ENCODE measurements at regions of chr6 and their contacts with region 1.

Region 1: GRCh38 chr6:159968440-159969203 is at the start of gene IGF2R:
- DNase-seq: peak; percentile 97
- ATAC-seq: peak; percentile 89
- H3K4me3 Mint-ChIP-seq: peak within 1 kb of the TSS; percentile 88
- H3K27ac Mint-ChIP-seq: peak within 1 kb of the TSS; percentile 89
- H3K4me1 Mint-ChIP-seq: peaks cover 33% of the 10 kb centered on the region
- H3K27me3 Mint-ChIP-seq: peaks cover 6% of the 10 kb centered on the region
- total RNA-seq, gene IGF2R: 75.0 to 77.7 TPM

Region 2: DNA sequence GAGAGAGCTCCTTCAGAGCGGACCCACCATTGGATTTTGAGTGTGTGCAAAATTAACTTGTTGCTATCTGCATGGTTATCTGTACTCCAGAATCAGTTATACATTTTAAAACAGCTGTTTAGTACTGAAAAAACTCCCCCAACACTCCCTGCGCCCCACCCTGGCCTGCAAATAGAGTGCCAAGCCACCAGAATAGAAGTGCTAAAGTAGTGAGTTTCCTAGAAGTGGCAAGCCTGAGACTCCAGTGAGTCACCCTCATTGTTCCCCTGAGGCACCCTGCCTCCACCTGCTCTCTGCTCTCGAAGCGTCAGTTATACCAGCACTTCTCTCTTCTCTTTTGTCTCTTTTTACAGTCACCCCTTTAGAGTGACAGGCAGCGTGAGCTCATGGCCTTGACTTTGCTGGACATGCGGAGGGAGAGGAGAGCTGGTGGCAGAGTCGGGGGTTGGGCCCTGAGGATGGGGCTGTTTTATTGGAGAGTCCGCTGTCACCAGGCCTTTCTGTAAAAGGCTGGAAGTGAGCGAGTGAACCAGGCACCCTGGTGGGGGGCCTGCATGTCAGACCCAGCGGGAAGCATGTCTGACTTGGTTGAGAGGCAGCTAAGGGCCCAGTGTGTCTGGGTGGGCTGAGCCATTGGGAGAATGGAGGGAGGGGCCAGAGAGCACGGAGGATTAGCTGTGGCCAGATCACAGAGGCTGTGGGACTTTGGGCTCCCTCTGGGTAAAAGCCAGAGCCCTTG is 10.7 kb after region 1 on chr6:
- POLR2A ChIA-PET with region 1: interaction called, 17 read pairs
- DNase-seq: peak; percentile 54
- ATAC-seq: peak; percentile 85
- H3K4me3 Mint-ChIP-seq: peak overlapping the region; percentile 75
- H3K27ac Mint-ChIP-seq: peak overlapping the region; percentile 91
- H3K4me1 Mint-ChIP-seq: peaks cover 80% of the 10 kb centered on the region
- H3K27me3 Mint-ChIP-seq: no peaks in the 10 kb centered on the region

Region 3: DNA sequence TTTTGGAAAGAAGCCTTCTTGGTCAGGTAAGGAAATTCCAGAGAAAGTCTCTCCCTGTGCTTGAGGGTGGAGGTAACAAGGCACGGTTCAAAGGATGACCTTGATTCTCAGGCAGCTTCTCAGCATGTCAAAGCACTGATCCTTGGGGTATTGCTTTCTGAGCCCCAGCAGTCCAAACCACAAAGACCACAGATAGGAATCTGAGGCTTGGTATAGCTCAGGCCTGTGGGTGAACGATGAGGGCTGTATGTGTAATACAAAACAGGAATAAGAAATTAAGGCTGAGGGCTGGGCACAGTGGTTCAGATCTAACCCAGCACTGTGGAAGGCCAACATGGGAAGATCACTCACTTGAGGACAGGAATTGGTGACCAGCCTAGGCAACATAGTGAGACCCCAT is 82.8 kb after region 1 on chr6:
- POLR2A ChIA-PET with region 1: no interaction called
- DNase-seq: no peak
- ATAC-seq: peak; percentile 41
- H3K4me3 Mint-ChIP-seq: peak overlapping the region; percentile 2
- H3K27ac Mint-ChIP-seq: no peak overlapping the region
- H3K4me1 Mint-ChIP-seq: peaks cover 22% of the 10 kb centered on the region
- H3K27me3 Mint-ChIP-seq: no peaks in the 10 kb centered on the region

Measured in activated naive CD8-positive, alpha-beta T cell treated with anti-CD3 and anti-CD28 coated beads, Interleukin-2, amount 10 ng/mL, durations not matched to agents 7 days and 5 days (primary cell).